ENCODE measurements at regions of chr5 and their contacts with region 1.

Region 1: GRCh38 chr5:80093796-80094195 is 58.6 kb downstream of the THBS4 start:
- DNase-seq: no peak
- ATAC-seq: no peak
- H3K4me3 ChIP-seq: no peak overlapping the region
- H3K4me3 Mint-ChIP-seq: no peak overlapping the region
- H3K27ac ChIP-seq: no peak overlapping the region
- H3K27ac Mint-ChIP-seq: peak overlapping the region; percentile 95
- H3K4me1 ChIP-seq: peaks cover 24% of the 10 kb centered on the region
- H3K4me1 Mint-ChIP-seq: peaks cover 37% of the 10 kb centered on the region
- H3K27me3 ChIP-seq: no peaks in the 10 kb centered on the region
- H3K27me3 Mint-ChIP-seq: no peaks in the 10 kb centered on the region
- CTCF ChIP-seq: no peak

Region 2: GRCh38 chr5:80083101-80083890 is 10.5 kb before region 1 on chr5:
- CTCF ChIA-PET with region 1: interaction called, 11 read pairs
- POLR2A ChIA-PET with region 1: interaction called, 4 read pairs
- intact Hi-C with region 1: no loop called
- DNase-seq: peak in 4 of 14 experiments; percentile 20 to 68 (median 59)
- ATAC-seq: peak; percentile 83
- H3K4me3 ChIP-seq: peak overlapping the region; percentile 39
- H3K4me3 Mint-ChIP-seq: peak overlapping the region; percentile 89
- H3K27ac ChIP-seq: no peak overlapping the region
- H3K27ac Mint-ChIP-seq: peak overlapping the region; percentile 71
- H3K4me1 ChIP-seq: peaks cover 10% of the 10 kb centered on the region
- H3K4me1 Mint-ChIP-seq: peaks cover 16% of the 10 kb centered on the region
- H3K27me3 ChIP-seq: no peaks in the 10 kb centered on the region
- H3K27me3 Mint-ChIP-seq: no peaks in the 10 kb centered on the region
- CTCF ChIP-seq: peak; percentile 46

Region 3: GRCh38 chr5:80141147-80141671 is 47.4 kb after region 1 on chr5:
- CTCF ChIA-PET with region 1: interaction called, 10 read pairs
- POLR2A ChIA-PET with region 1: interaction called, 13 read pairs
- intact Hi-C with region 1: loop called (anchors 1 to 5 kb)
- DNase-seq: peak in 2 of 14 experiments; percentile 40 to 42
- ATAC-seq: no peak
- H3K4me3 ChIP-seq: no peak overlapping the region
- H3K4me3 Mint-ChIP-seq: peak overlapping the region; percentile 84
- H3K27ac ChIP-seq: peak overlapping the region; percentile 42 to 51
- H3K27ac Mint-ChIP-seq: peak overlapping the region; percentile 95
- H3K4me1 ChIP-seq: peaks cover 60% of the 10 kb centered on the region
- H3K4me1 Mint-ChIP-seq: peaks cover 84% of the 10 kb centered on the region
- H3K27me3 ChIP-seq: no peaks in the 10 kb centered on the region
- H3K27me3 Mint-ChIP-seq: no peaks in the 10 kb centered on the region
- CTCF ChIP-seq: no peak

Region 4: GRCh38 chr5:80191991-80192398 is 98.2 kb after region 1 on chr5:
- CTCF ChIA-PET with region 1: no interaction called
- POLR2A ChIA-PET with region 1: interaction called, 10 read pairs
- intact Hi-C with region 1: loop called in 1 of 2 experiments (anchors 5 kb)
- DNase-seq: peak; percentile 28 to 72 (median 46)
- ATAC-seq: peak; percentile 60
- H3K4me3 ChIP-seq: peak overlapping the region; percentile 31
- H3K4me3 Mint-ChIP-seq: peak overlapping the region; percentile 61
- H3K27ac ChIP-seq: peak overlapping the region; percentile 74 to 86
- H3K27ac Mint-ChIP-seq: peak overlapping the region; percentile 94
- H3K4me1 ChIP-seq: peaks cover 93% of the 10 kb centered on the region
- H3K4me1 Mint-ChIP-seq: peaks cover 89% of the 10 kb centered on the region
- H3K27me3 ChIP-seq: no peaks in the 10 kb centered on the region
- H3K27me3 Mint-ChIP-seq: no peaks in the 10 kb centered on the region
- CTCF ChIP-seq: no peak

Region 5: GRCh38 chr5:80246001-80246758 is 152.4 kb after region 1 on chr5:
- CTCF ChIA-PET with region 1: interaction called, 5 read pairs
- POLR2A ChIA-PET with region 1: interaction called, 3 read pairs
- intact Hi-C with region 1: loop called in 1 of 2 experiments (anchors 2 kb)
- DNase-seq: peak in 1 of 14 experiments; percentile 36
- ATAC-seq: no peak
- H3K4me3 ChIP-seq: no peak overlapping the region
- H3K4me3 Mint-ChIP-seq: peak overlapping the region; percentile 26
- H3K27ac ChIP-seq: peak overlapping the region in 1 of 2 donors; percentile 49
- H3K27ac Mint-ChIP-seq: peak overlapping the region; percentile 81
- H3K4me1 ChIP-seq: peaks cover 60% of the 10 kb centered on the region
- H3K4me1 Mint-ChIP-seq: peaks cover 71% of the 10 kb centered on the region
- H3K27me3 ChIP-seq: no peaks in the 10 kb centered on the region
- H3K27me3 Mint-ChIP-seq: no peaks in the 10 kb centered on the region
- CTCF ChIP-seq: no peak

Region 6: GRCh38 chr5:80308526-80308925 is 214.7 kb after region 1 on chr5:
- CTCF ChIA-PET with region 1: interaction called, 75 read pairs
- POLR2A ChIA-PET with region 1: interaction called, 20 read pairs
- intact Hi-C with region 1: loop called (anchors 1 kb)
- DNase-seq: no peak
- ATAC-seq: no peak
- H3K4me3 ChIP-seq: no peak overlapping the region
- H3K4me3 Mint-ChIP-seq: no peak overlapping the region
- H3K27ac ChIP-seq: no peak overlapping the region
- H3K27ac Mint-ChIP-seq: no peak overlapping the region
- H3K4me1 ChIP-seq: peaks cover 6% of the 10 kb centered on the region
- H3K4me1 Mint-ChIP-seq: no peaks in the 10 kb centered on the region
- H3K27me3 ChIP-seq: no peaks in the 10 kb centered on the region
- H3K27me3 Mint-ChIP-seq: no peaks in the 10 kb centered on the region
- CTCF ChIP-seq: no peak

Region 7: DNA sequence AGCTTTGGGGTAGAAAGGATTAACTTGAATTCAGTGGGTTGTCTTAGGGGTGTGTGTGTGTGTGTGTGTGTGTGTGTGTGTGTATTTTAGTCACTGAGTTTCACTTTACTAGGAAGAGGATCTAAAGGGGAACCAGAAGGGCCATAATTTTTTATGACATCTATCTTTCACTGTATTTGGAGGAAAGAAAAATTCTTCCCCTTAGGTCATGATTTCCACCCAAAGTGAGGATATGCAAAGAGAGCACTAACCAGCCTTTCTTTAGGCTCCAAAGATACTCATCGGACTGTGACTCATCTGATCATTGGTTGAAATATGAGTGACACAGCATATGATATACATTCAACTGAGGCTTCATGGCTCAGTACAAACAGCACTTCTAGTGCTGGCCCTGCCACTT is 791.1 kb after region 1 on chr5:
- CTCF ChIA-PET with region 1: no interaction called
- POLR2A ChIA-PET with region 1: no interaction called
- intact Hi-C with region 1: no loop called
- DNase-seq: no peak
- ATAC-seq: no peak
- H3K4me3 ChIP-seq: no peak overlapping the region
- H3K4me3 Mint-ChIP-seq: no peak overlapping the region
- H3K27ac ChIP-seq: no peak overlapping the region
- H3K27ac Mint-ChIP-seq: peak overlapping the region; percentile 10
- H3K4me1 ChIP-seq: no peaks in the 10 kb centered on the region
- H3K4me1 Mint-ChIP-seq: peaks cover 14% of the 10 kb centered on the region
- H3K27me3 ChIP-seq: no peaks in the 10 kb centered on the region
- H3K27me3 Mint-ChIP-seq: no peaks in the 10 kb centered on the region
- CTCF ChIP-seq: no peak

Measured in CD4-positive, alpha-beta T cell (primary cell).